ENCODE measurements at regions of chr2 and their contacts with region 1.

Region 1: GRCh38 chr2:70861777-70862625 is 26.4 kb upstream of the CD207 start:
- DNase-seq: peak; percentile 87
- H3K4me3 ChIP-seq: no peak overlapping the region
- H3K27ac ChIP-seq: no peak overlapping the region
- H3K4me1 ChIP-seq: no peaks in the 10 kb centered on the region
- H3K27me3 ChIP-seq: no peaks in the 10 kb centered on the region
- CTCF ChIP-seq: peak; percentile 99

Region 2: GRCh38 chr2:70656421-70657010 is 205.5 kb before region 1 on chr2:
- CTCF ChIA-PET with region 1: no interaction called
- POLR2A ChIA-PET with region 1: no interaction called
- intact Hi-C with region 1: loop called (anchors 10 kb)
- DNase-seq: no peak
- H3K4me3 ChIP-seq: no peak overlapping the region
- H3K27ac ChIP-seq: no peak overlapping the region
- H3K4me1 ChIP-seq: no peaks in the 10 kb centered on the region
- H3K27me3 ChIP-seq: no peaks in the 10 kb centered on the region
- CTCF ChIP-seq: no peak

Region 3: DNA sequence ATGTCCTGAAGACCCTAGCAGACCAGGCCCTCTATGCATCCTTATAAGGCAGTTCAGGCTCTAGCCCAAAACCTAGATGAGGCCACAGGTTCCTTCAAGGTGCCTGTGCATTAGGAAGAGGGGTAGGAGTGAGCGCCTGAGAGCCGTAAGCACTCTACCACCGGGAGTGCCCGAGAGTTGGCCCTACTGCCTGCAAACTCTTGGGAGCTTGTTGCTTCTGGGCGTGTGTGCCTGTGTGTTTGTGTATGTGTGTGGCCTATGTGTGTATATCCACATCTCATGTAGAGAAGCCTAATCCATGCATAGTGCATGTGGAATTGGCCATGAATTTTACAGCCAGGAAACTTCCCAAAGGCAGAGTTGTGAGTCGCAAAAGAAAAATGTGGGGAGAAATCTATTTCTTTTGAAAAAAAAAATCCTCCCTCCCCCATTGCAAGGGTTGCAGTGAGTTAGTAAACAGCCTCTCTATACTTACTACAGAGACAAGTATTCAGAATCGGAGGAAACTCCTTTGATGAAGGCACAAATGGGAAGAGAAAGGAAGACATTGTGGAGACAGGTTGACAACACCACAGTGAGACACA is 190.8 kb before region 1 on chr2:
- CTCF ChIA-PET with region 1: no interaction called
- POLR2A ChIA-PET with region 1: no interaction called
- intact Hi-C with region 1: no loop called
- DNase-seq: no peak
- H3K4me3 ChIP-seq: no peak overlapping the region
- H3K27ac ChIP-seq: no peak overlapping the region
- H3K4me1 ChIP-seq: no peaks in the 10 kb centered on the region
- H3K27me3 ChIP-seq: no peaks in the 10 kb centered on the region
- CTCF ChIP-seq: no peak

Region 4: DNA sequence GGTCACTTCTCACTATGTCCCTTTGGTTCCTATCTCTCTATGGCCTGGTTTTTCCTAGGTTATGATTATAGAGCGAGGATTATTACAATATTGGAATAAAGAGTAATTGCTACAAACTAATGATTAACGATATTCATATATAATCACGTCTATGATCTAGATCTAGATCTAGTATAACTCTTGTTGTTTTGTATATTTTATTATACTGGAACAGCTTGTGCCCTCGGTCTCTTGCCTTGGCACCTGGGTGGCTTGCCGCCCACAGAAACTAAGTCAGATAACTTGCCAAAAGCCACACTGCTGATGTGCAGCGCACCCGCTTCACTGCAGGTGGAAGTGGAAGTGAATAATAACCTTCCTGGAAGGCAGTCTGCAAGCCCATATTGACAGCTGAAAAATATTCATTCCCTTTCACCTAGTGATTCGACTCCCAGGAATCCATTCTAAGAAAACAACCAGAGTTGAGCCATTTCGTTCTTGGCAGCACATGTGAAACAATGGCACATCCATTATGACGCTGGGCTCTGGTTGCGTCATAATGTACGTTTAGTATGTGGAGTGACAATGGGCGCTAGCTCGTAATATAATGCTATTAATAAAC is 115.7 kb after region 1 on chr2:
- CTCF ChIA-PET with region 1: no interaction called
- POLR2A ChIA-PET with region 1: no interaction called
- intact Hi-C with region 1: loop called (anchors 10 kb)
- DNase-seq: peak; percentile 46
- H3K4me3 ChIP-seq: peak overlapping the region; percentile 50
- H3K27ac ChIP-seq: no peak overlapping the region
- H3K4me1 ChIP-seq: peaks cover 4% of the 10 kb centered on the region
- H3K27me3 ChIP-seq: no peaks in the 10 kb centered on the region
- CTCF ChIP-seq: peak; percentile 41; the same call in 1 of the 2 replicates

Measured in A673 (cell line).